ENCODE measurements at regions of chrX and their contacts with region 1.

Region 1: GRCh38 chrX:104136241-104137019 is 20.4 kb downstream of the SLC25A53 start:
- DNase-seq: peak; percentile 62
- H3K4me3 Mint-ChIP-seq: no peak overlapping the region
- H3K27ac Mint-ChIP-seq: no peak overlapping the region
- H3K4me1 Mint-ChIP-seq: peaks cover 10% of the 10 kb centered on the region
- H3K27me3 Mint-ChIP-seq: no peaks in the 10 kb centered on the region

Region 2: GRCh38 chrX:104098151-104098808 is 38.1 kb before region 1 on chrX:
- CTCF ChIA-PET with region 1: interaction called, 18 read pairs
- DNase-seq: peak; percentile 63
- H3K4me3 Mint-ChIP-seq: no peak overlapping the region
- H3K27ac Mint-ChIP-seq: no peak overlapping the region
- H3K4me1 Mint-ChIP-seq: no peaks in the 10 kb centered on the region
- H3K27me3 Mint-ChIP-seq: peaks cover 4% of the 10 kb centered on the region

Region 3: DNA sequence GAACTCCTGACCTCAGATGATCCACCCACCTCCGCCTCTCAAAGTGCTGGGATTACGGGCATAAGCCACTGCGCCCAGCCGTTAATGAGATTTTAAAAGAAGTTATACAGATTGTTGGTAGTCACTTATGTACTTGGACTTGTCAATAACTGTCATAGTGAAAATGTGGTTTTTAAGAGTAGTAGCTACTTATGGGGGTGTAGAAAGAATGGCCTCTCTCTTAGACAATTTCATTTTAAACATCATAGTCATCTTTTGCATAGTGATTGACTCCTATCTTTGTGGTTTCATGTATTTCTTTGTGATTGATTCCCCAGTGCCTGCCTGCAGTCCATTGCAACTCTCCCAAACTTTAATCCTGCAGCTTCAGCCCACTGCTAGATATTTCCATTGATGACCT is 47.3 kb after region 1 on chrX:
- CTCF ChIA-PET with region 1: no interaction called
- DNase-seq: no peak
- H3K4me3 Mint-ChIP-seq: no peak overlapping the region
- H3K27ac Mint-ChIP-seq: no peak overlapping the region
- H3K4me1 Mint-ChIP-seq: no peaks in the 10 kb centered on the region
- H3K27me3 Mint-ChIP-seq: no peaks in the 10 kb centered on the region